ENCODE measurements at regions of chr1 and their contacts with region 1.

Region 1: DNA sequence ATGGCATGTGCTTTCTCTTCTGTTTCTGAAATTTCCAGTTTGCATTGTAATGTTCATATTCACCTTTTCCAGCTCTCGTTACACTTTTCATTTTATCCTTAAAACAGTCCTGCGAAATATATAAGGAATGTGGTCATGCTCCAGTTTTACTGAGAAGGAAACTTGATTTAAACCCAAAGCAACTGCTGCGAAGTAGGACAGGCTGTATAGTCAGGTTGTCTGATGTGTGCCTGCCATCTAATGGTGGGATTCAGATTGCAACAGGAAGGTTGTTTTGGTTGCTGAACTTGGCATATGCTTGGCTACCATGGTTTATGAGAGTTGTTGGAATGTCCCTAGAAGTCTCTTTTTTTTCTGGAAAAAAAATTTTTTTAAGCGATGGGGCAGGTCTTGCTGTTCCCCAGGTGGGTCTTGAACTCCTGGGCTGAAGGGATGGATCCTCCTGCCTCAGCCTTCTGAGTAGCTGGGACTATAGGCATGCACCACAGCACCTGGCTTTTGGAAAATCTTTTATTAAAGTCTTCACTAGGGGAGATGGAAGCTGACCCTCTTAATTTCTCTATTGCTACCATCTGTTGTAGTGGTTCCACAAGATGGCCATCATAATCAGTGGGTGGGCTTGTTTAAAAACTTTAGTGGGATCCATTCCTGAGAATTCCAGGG is 86.9 kb downstream of the UCK2 start:
- DNase-seq: peak in 1 of 2 donors; percentile 63
- ATAC-seq: peak in 7 of 8 donors; percentile 65 to 81 (median 78)
- H3K4me3 ChIP-seq: no peak overlapping the region
- H3K27ac ChIP-seq: no peak overlapping the region
- H3K4me1 ChIP-seq: peaks cover 0 to 26% (median 16%) of the 10 kb centered on the region in 9 donors
- H3K27me3 ChIP-seq: no peaks in the 10 kb centered on the region
- CTCF ChIP-seq: peak; percentile 67 to 93 (median 85)

Region 2: DNA sequence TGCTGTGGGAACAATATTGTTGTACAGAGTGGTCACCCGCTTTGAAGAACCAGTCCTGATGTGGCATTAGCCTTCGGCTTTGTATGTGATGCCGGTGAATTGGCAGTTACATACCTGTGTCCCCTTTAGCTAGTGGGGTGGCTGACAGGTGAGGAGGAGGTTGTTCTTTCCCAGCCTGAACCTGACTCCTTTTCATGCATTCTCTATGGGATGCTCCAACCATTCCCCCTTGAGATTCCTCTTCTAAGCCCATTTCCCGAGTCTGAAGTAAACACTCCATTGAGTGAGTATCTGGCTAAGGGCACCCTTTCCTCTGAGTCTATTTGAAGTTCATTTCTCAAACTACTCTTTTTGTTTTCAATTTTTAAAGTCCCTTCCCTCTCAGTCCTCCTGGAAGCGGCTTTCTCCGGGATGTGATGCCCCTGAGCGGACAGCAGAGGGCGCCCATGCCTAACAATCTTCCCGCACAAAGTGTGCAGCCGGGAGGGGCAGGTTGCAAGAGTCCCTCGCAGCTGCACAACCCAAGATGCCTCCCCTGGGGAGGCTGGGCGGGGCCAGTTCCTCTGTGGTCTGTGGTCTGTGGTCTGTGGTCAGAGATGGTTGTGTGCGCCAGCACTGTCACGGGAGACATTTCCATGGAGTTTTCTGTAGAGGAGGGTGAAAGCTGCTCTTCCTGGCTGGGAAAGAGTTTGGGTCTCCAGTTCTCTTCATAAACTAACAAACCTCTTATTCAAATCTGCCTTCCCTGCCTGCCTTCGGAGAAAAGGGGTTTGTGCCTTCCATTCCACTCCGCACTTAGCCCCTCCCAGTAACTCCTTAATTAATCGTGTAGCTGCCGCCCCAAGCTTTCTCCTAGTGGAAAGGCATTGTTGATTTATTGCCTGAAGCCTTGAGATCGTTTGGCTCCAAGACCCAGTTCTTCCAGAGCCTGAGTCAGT is 521.4 kb before region 1 on chr1:
- intact Hi-C with region 1: loop called in 6 of 10 experiments (anchors 5 to 10 kb)
- DNase-seq: peak; percentile 81 to 83
- ATAC-seq: peak; percentile 86 to 95 (median 93)
- H3K4me3 ChIP-seq: peak overlapping the region in 4 of 10 donors; percentile 16 to 32 (median 22)
- H3K27ac ChIP-seq: peak overlapping the region in 1 of 10 donors; percentile 26
- H3K4me1 ChIP-seq: peaks cover 0 to 23% (median 11%) of the 10 kb centered on the region in 9 donors
- H3K27me3 ChIP-seq: peaks cover 0 to 97% (median 0%) of the 10 kb centered on the region in 7 donors
- CTCF ChIP-seq: peak; percentile 86 to 98 (median 97)

Region 3: GRCh38 chr1:165603810-165604209 is 310.5 kb before region 1 on chr1:
- intact Hi-C with region 1: loop called (anchors 1 to 5 kb)
- DNase-seq: no peak
- ATAC-seq: no peak
- H3K4me3 ChIP-seq: no peak overlapping the region
- H3K27ac ChIP-seq: no peak overlapping the region
- H3K4me1 ChIP-seq: peaks cover 0 to 14% (median 0%) of the 10 kb centered on the region in 9 donors
- H3K27me3 ChIP-seq: no peaks in the 10 kb centered on the region
- CTCF ChIP-seq: no peak

Region 4: GRCh38 chr1:165717918-165718515 is 196.2 kb before region 1 on chr1:
- intact Hi-C with region 1: loop called (anchors 1 to 5 kb)
- DNase-seq: peak in 1 of 2 donors; percentile 31
- ATAC-seq: peak in 2 of 8 donors; percentile 27 to 48
- H3K4me3 ChIP-seq: no peak overlapping the region
- H3K27ac ChIP-seq: no peak overlapping the region
- H3K4me1 ChIP-seq: no peaks in the 10 kb centered on the region
- H3K27me3 ChIP-seq: no peaks in the 10 kb centered on the region
- CTCF ChIP-seq: peak; percentile 23 to 77 (median 66)

Region 5: GRCh38 chr1:165827268-165828102 is 86.8 kb before region 1 on chr1 and contains the start of gene UCK2:
- intact Hi-C with region 1: loop called in 3 of 10 experiments (anchors 5 to 10 kb)
- DNase-seq: peak; percentile 67 to 78
- ATAC-seq: peak; percentile 88 to 96 (median 93)
- H3K4me3 ChIP-seq: peak within 1 kb of the TSS; percentile 68 to 92 (median 78)
- H3K27ac ChIP-seq: peak within 1 kb of the TSS; percentile 25 to 95 (median 91)
- H3K4me1 ChIP-seq: peaks cover 0 to 20% (median 15%) of the 10 kb centered on the region in 9 donors
- H3K27me3 ChIP-seq: no peaks in the 10 kb centered on the region
- CTCF ChIP-seq: peak in 3 of 9 donors; percentile 10 to 39 (median 22)
- total RNA-seq, gene UCK2: 7.3 to 22.0 (median 11.3) TPM

Measured in heart right ventricle (tissue), 16 donors.